T-cell (primary cell): ENCODE measurements at regions of chr15 and their contacts with region 1.

Region 1: DNA sequence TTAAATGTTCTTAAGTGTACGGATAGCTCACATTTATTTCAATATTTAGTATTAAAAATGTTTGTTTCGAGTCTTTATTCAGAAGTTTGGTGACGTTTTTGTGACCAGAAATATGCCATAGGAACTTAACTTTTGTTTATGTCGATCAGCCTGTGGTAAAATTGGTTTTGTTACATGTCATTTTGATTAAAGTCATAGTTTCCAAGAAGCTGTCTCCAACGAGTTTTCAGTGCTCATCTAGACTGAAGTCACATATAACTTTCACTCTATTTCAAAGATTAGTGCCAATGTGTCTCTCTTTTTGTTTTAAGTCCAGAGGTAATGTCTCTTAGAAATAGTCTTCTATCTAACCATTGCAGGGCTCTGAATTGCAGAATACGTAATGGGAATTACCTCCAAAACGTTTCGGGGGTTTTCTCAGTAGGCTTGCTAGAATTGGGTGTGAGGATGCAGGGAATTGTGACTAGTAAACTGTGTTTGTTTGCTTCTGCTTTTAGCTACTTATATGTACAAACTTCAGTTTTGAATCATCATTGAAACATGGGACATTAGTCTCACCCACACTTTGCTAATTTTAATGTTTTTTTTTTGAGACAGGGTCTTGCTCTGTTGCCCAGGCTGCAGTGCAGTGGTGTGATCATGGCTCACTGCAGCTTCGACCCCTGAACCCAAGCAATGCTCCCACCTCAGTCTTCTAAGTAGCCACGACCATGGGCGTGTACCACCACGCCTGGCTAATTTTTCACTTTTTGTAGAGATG is 3.0 kb downstream of the BUB1B start:
- DNase-seq: no peak
- ATAC-seq: no peak
- H3K4me3 ChIP-seq: no peak overlapping the region
- H3K4me3 Mint-ChIP-seq: peak overlapping the region in 1 of 3 donors; percentile 14
- H3K27ac ChIP-seq: no peak overlapping the region
- H3K27ac Mint-ChIP-seq: no peak overlapping the region
- H3K4me1 ChIP-seq: peaks cover 0 to 12% of the 10 kb centered on the region in 2 experiments
- H3K4me1 Mint-ChIP-seq: no peaks in the 10 kb centered on the region
- H3K27me3 ChIP-seq: no peaks in the 10 kb centered on the region
- H3K27me3 Mint-ChIP-seq: no peaks in the 10 kb centered on the region

Region 2: DNA sequence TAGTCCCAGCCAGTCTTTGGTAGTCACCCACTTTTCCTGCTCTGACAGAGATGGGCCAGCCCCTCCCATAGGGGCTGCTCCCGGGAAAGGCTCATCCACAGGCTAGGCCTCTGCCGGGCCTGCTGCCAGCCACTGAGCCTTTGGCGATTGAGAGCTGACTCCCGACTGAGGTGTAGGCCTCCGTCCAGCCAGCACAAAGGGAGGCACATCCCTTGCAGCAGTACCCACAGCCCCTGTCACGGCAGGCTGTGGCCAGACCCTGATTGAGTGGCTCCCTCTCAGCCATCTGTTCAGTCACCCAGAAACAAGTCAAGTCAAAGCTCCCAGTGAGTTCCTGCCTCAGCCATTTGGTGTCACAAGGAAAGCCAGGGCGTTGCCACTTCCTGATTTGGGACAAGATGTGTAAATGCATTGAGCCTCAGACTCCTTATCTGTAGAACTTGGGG is 68.8 kb after region 1 on chr15:
- CTCF ChIA-PET with region 1: no interaction called
- POLR2A ChIA-PET with region 1: interaction called in 1 of 2 experiments, 10 read pairs
- DNase-seq: no peak
- ATAC-seq: no peak
- H3K4me3 ChIP-seq: no peak overlapping the region
- H3K4me3 Mint-ChIP-seq: no peak overlapping the region
- H3K27ac ChIP-seq: no peak overlapping the region
- H3K27ac Mint-ChIP-seq: no peak overlapping the region
- H3K4me1 ChIP-seq: no peaks in the 10 kb centered on the region
- H3K4me1 Mint-ChIP-seq: no peaks in the 10 kb centered on the region
- H3K27me3 ChIP-seq: no peaks in the 10 kb centered on the region
- H3K27me3 Mint-ChIP-seq: peaks cover 2 to 6% of the 10 kb centered on the region in 2 donors